ENCODE measurements at regions of chr1 and their contacts with region 1.

Region 1: DNA sequence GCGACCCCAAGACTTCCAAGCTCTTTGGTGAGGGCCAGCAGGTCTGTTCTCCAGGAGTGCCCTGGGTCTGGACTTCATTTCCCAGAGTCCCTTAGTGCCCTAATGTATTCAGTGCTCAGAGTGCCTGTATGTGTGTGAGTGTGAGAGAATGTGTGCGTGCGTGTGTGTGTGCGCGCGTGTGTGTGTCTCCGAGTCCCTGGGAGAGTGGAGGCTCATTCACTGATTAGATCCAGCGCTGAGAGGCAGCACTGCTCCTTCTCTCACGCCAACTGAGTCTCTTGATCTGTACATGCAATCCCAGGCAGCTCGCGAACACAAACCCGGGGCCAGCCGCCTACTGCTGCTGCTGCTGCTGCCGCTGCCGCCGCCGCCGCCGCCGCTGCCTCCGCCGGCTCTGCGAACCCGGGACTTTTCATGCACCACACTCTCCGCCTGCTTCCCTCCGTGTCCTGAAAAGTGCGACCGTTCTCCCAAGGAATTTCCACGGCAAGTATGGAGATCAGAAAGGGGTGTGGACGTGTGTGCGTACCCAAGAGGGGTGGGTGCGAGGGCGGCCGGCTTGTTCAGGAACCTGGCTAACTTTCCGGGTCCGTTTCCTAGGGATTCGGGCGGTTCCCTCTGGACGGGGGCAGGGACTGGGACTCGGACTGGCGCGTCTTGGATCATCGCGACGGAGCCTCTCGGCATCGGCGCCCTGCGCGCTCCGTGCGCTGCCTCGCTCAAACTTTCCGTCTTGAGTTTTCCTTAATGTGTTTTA is at the start of gene RNF220:
- DNase-seq: peak; percentile 34
- ATAC-seq: peak; percentile 63
- H3K4me3 Mint-ChIP-seq: peak within 1 kb of the TSS; percentile 86
- H3K27ac Mint-ChIP-seq: peak within 1 kb of the TSS; percentile 53
- H3K4me1 Mint-ChIP-seq: peaks cover 38% of the 10 kb centered on the region
- H3K27me3 Mint-ChIP-seq: peaks cover 57% of the 10 kb centered on the region
- CTCF ChIP-seq: no peak
- total RNA-seq, gene RNF220: 102 and 103 TPM in 2 replicates

Region 2: GRCh38 chr1:44327679-44328491 is 77.3 kb before region 1 on chr1:
- CTCF ChIA-PET with region 1: no interaction called
- POLR2A ChIA-PET with region 1: no interaction called
- intact Hi-C with region 1: no loop called
- DNase-seq: no peak
- ATAC-seq: no peak
- H3K4me3 Mint-ChIP-seq: no peak overlapping the region
- H3K27ac Mint-ChIP-seq: no peak overlapping the region
- H3K4me1 Mint-ChIP-seq: no peaks in the 10 kb centered on the region
- H3K27me3 Mint-ChIP-seq: no peaks in the 10 kb centered on the region
- CTCF ChIP-seq: no peak

Region 3: DNA sequence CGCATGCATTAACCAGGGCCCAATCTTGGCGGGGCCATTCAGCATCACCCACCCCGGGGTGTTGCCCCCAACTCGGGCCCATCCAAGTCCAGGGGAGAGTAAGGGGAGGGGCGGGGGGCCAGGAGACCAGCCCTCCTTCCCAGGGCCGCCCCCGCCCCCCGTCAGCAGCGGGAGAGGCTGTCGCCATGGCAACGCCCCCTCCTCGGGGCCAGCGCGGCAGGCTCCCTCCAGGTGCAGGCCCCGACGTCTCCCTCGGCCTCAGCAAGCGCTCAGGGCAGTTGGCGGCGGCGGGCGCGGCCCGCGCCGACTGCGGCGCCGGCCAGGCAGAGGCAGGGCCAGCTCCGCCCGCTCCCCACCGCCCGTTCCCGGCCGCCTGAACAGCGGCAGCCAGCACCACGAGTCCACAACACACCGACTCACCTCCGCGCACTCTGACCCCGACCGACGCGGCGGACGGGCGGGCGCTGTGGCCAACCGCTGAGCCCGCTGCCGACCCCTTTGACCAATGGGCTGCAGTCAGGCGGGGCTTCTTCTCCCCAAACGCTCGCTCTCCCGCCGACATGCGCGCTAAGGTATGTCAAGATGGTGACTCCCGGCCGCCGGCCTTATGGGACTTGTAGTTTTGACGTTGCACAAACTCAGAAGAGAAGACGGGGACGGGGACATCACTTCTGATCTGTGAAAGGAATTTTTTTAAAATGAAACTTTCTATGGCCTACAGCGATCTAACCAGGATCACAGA is 50.2 kb before region 1 on chr1 and contains the start of gene ERI3:
- CTCF ChIA-PET with region 1: no interaction called
- POLR2A ChIA-PET with region 1: no interaction called
- intact Hi-C with region 1: loop called (anchors 2 kb)
- DNase-seq: peak; percentile 91
- ATAC-seq: peak; percentile 99
- H3K4me3 Mint-ChIP-seq: peak within 1 kb of the TSS; percentile 90
- H3K27ac Mint-ChIP-seq: peak within 1 kb of the TSS; percentile 83
- H3K4me1 Mint-ChIP-seq: peaks cover 28% of the 10 kb centered on the region
- H3K27me3 Mint-ChIP-seq: no peaks in the 10 kb centered on the region
- CTCF ChIP-seq: no peak
- total RNA-seq, gene ERI3: 36.2 and 37.9 TPM in 2 replicates

Region 4: GRCh38 chr1:44417351-44418021 is 12.3 kb after region 1 on chr1:
- CTCF ChIA-PET with region 1: no interaction called
- POLR2A ChIA-PET with region 1: no interaction called
- intact Hi-C with region 1: loop called (anchors 1 kb)
- DNase-seq: no peak
- ATAC-seq: no peak
- H3K4me3 Mint-ChIP-seq: peak overlapping the region; percentile 29
- H3K27ac Mint-ChIP-seq: no peak overlapping the region
- H3K4me1 Mint-ChIP-seq: peaks cover 9% of the 10 kb centered on the region
- H3K27me3 Mint-ChIP-seq: peaks cover 61% of the 10 kb centered on the region
- CTCF ChIP-seq: no peak

Region 5: GRCh38 chr1:44423591-44424537 is 18.6 kb after region 1 on chr1:
- CTCF ChIA-PET with region 1: no interaction called
- POLR2A ChIA-PET with region 1: interaction called, 4 read pairs
- intact Hi-C with region 1: loop called (anchors 2 kb)
- DNase-seq: no peak
- ATAC-seq: no peak
- H3K4me3 Mint-ChIP-seq: peak overlapping the region; percentile 39
- H3K27ac Mint-ChIP-seq: no peak overlapping the region
- H3K4me1 Mint-ChIP-seq: peaks cover 6% of the 10 kb centered on the region
- H3K27me3 Mint-ChIP-seq: peaks cover 78% of the 10 kb centered on the region
- CTCF ChIP-seq: no peak

Region 6: GRCh38 chr1:44511769-44512168 is 106.5 kb after region 1 on chr1:
- CTCF ChIA-PET with region 1: no interaction called
- POLR2A ChIA-PET with region 1: no interaction called
- intact Hi-C with region 1: no loop called
- DNase-seq: no peak
- ATAC-seq: no peak
- H3K4me3 Mint-ChIP-seq: peak overlapping the region; percentile 65
- H3K27ac Mint-ChIP-seq: peak overlapping the region; percentile 6
- H3K4me1 Mint-ChIP-seq: peaks cover 59% of the 10 kb centered on the region
- H3K27me3 Mint-ChIP-seq: no peaks in the 10 kb centered on the region
- CTCF ChIP-seq: no peak

Region 7: DNA sequence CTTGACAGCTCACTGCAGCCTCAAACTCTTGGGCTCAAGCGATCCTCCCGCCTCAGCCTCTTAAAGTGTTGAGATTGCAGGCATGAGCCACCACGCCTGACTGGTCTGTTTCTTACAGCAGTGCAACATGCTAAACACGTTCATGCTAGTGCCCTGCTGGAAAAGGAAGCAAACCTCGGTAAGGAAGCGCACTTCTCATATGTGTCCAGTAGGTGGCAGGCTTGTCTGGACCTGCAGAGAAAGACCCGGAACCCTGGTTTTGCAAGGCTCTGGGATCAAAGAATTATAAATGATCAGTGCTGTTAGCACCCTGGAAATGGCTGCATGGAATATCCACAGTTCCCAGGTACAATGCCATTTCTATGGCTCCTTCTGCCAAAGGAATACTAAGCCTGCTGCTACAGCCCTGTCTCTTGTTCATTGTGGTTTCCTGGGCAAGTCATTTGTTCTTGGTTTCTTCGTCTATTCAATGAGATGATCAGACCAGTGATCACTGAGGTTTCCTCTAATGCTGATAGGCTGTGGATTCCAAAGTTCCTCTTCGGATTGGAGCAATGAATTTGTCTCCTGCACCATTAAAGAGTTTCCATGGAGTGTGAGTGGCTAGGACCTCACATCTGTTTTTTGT is 309.8 kb after region 1 on chr1:
- CTCF ChIA-PET with region 1: no interaction called
- POLR2A ChIA-PET with region 1: no interaction called
- intact Hi-C with region 1: loop called (anchors 2 kb)
- DNase-seq: no peak
- ATAC-seq: peak; percentile 78
- H3K4me3 Mint-ChIP-seq: peak overlapping the region; percentile 58
- H3K27ac Mint-ChIP-seq: peak overlapping the region; percentile 89
- H3K4me1 Mint-ChIP-seq: peaks cover 75% of the 10 kb centered on the region
- H3K27me3 Mint-ChIP-seq: no peaks in the 10 kb centered on the region
- CTCF ChIP-seq: peak; percentile 72

Region 8: DNA sequence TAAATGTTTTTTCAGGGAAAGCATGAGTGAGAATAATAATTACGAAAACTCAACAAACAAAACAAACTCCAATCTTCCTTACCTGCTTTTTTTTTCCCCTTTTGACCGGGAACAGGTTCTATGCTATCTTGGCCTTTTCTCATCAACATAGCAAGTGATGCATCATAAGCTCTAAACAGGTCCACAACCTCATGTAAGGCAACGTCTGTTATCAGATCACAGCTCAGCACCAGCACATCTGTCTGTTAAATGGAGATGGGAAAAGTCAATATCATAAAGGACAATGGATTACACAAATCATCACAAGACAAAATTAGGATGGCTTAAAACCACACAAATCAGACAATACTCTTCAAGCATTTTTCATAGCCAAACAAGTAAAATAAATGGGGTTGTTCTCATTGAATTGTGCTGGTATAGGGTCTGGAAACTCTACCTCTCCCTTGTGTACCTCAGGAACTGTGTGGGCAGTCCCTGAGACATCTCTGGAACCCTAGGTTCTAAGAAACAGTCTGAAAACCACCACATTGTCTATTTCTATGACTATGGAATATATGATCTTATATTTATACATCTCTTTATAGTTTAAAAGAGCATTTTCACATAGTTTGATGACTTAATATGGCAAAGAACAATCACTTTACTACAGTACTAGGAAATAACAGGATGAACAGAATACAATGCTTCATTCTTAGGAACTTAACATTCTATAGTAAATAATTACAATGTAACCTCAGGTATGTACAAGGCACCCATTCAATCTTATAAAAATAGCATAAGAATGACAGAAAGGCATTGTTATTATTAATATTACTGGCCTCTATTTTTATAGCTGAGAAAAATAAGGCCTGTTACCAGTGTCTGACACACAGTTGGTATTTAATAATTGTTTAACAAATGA is 536.5 kb after region 1 on chr1:
- CTCF ChIA-PET with region 1: no interaction called
- POLR2A ChIA-PET with region 1: no interaction called
- intact Hi-C with region 1: no loop called
- DNase-seq: no peak
- ATAC-seq: no peak
- H3K4me3 Mint-ChIP-seq: no peak overlapping the region
- H3K27ac Mint-ChIP-seq: no peak overlapping the region
- H3K4me1 Mint-ChIP-seq: no peaks in the 10 kb centered on the region
- H3K27me3 Mint-ChIP-seq: no peaks in the 10 kb centered on the region
- CTCF ChIP-seq: no peak

Measured in activated B cell treated with CpG ODN at 0.5 μM for 24 hours (primary cell).